Activated CD8-positive, alpha-beta T cell treated with anti-CD3 and anti-CD28 coated beads, Interleukin-2, amount 10 ng/mL, durations not matched to agents 7 days and 5 days (primary cell): ENCODE measurements at regions of chr6 and their contacts with region 1.

Region 1: DNA sequence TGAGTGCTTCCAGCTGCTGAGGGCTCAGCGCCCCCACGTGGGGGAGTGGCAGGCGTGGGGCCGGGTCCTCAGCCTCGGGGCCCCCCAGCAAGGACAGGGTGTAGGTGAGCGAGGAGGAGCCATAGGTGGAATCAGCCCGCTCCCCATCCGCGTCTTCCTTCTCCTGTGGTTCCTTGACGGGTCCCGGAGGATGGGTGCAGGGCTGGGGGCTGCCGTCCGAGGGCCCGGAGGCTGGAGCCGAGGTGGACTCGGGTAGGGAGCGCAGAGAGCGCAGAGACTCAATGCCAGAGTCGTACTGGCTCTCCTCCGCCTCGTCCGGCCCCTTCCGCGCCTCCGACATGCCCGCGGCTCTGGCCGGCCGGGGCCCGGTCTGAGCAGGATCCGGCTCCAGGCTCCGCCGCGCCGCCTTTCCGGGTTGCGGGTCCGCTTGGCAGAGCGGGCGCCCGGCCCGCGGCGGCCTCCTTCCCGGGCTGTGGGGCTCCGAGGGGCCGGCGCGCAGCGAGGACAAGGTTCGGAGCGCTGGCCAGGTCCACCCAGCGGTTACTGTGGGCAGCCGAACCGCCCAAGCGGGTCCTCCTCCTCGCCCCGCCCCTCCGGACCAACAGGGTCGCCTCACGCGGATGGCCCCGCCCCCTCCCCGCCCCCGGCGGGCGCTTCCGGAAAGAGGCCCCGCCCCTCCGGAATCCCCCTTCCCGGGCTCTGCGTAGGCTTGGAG is at the start of gene NFKBIE:
- DNase-seq: peak; percentile 91
- ATAC-seq: peak; percentile 73
- H3K4me3 Mint-ChIP-seq: peak within 1 kb of the TSS; percentile 98
- H3K27ac Mint-ChIP-seq: peak within 1 kb of the TSS; percentile 96
- H3K4me1 Mint-ChIP-seq: peaks cover 63% of the 10 kb centered on the region
- H3K27me3 Mint-ChIP-seq: peaks cover 15% of the 10 kb centered on the region
- total RNA-seq, gene NFKBIE: 14.1 to 16.9 TPM

Region 2: GRCh38 chr6:44138717-44139350 is 126.3 kb before region 1 on chr6:
- CTCF ChIA-PET with region 1: no interaction called
- POLR2A ChIA-PET with region 1: no interaction called
- DNase-seq: no peak
- ATAC-seq: no peak
- H3K4me3 Mint-ChIP-seq: no peak overlapping the region
- H3K27ac Mint-ChIP-seq: no peak overlapping the region
- H3K4me1 Mint-ChIP-seq: no peaks in the 10 kb centered on the region
- H3K27me3 Mint-ChIP-seq: no peaks in the 10 kb centered on the region

Region 3: DNA sequence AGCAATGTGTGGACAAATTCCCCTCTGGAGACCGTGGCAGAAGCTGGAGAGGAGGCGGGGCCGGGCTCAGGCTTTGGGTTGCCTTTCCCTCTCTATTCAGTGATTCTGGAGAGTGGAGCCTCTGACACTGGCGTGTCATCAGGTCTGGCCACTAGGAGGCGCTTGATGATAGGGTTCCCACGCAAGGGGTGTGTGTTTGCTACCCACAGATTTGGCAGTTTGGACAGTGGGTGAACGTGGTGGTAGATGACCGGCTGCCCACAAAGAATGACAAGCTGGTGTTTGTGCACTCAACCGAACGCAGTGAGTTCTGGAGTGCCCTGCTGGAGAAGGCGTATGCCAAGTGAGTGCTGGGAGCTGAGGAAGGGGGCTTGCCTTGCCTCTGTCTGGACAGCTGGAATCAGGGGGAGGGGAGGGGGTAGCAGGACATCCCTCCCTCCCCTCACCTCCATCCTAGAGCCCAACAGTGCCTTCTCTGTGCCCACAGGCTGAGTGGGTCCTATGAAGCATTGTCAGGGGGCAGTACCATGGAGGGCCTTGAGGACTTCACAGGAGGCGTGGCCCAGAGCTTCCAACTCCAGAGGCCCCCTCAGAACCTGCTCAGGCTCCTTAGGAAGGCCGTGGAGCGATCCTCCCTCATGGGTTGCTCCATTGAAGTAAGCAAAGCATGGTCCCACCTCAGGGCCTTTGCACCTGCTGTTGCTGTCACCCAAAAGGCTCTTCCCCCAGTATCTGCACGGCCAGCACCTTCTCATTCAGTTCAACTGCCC is 92.2 kb before region 1 on chr6:
- CTCF ChIA-PET with region 1: interaction called, 11 read pairs
- POLR2A ChIA-PET with region 1: no interaction called
- DNase-seq: peak; percentile 88
- ATAC-seq: peak; percentile 89
- H3K4me3 Mint-ChIP-seq: no peak overlapping the region
- H3K27ac Mint-ChIP-seq: peak overlapping the region; percentile 51
- H3K4me1 Mint-ChIP-seq: peaks cover 34% of the 10 kb centered on the region
- H3K27me3 Mint-ChIP-seq: peaks cover 14% of the 10 kb centered on the region

Region 4: DNA sequence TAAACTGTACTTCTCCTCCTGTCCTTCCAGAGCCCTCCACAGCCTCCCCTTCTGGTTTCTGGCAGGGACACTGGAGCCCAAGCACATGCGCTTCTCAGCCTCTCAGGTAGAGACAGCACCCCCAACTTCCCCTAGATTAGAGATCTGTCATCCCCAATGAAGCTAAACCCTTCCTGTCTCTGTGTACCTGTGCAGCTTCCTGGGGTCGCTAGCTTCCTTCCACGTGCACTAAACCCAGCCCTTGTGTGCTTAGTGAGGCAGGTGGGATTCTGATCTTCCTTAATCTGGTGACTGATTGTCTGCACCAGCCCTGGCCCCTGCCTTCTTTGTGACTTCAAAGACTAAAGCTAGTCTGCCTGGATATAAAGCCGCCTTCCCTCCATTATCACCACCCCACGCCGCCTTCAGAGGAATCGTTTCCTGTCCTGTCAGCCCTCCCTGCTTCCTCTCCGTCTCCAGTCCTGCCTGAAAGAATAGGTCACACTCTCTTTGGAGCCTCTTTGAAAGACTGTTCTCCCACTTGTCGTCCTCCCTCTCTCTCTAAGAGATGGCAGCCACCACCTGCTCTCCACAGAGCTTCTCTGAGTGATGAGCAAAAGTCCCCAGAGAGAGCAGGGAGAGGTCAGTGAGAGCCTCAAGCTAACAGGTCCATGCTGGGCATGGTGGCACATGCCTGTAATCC is 79.1 kb before region 1 on chr6:
- CTCF ChIA-PET with region 1: no interaction called
- POLR2A ChIA-PET with region 1: no interaction called
- DNase-seq: no peak
- ATAC-seq: peak; percentile 46
- H3K4me3 Mint-ChIP-seq: no peak overlapping the region
- H3K27ac Mint-ChIP-seq: peak overlapping the region; percentile 58
- H3K4me1 Mint-ChIP-seq: peaks cover 7% of the 10 kb centered on the region
- H3K27me3 Mint-ChIP-seq: peaks cover 5% of the 10 kb centered on the region

Region 5: DNA sequence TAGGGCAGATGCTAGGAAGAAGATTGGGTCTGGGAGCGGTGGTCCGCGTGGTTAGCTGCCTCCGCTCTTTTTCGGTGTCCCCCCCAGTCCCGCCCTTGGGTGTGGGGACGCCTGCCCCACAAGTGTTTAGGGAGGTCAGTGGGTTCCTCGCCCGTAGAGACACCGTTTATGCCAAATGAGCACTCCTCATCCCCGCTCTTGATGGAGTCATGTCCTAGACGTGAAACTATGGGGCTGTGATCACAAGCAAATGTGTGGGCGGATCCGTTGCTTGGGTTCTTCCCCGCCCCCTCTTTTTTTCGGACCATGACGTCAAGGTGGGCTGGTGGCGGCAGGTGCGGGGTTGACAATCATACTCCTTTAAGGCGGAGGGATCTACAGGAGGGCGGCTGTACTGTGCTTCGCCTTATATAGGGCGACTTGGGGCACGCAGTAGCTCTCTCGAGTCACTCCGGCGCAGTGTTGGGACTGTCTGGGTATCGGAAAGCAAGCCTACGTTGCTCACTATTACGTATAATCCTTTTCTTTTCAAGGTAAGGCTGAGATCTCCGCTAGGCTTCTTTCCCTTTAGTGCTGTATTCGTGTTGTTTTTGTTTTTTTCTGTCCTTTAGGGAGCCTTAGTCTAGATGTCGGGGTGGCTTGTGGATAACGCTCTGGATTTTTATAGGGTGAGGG is 18.4 kb before region 1 on chr6 and contains the start of gene HSP90AB1:
- CTCF ChIA-PET with region 1: interaction called, 9 read pairs
- POLR2A ChIA-PET with region 1: interaction called, 81 read pairs
- DNase-seq: peak; percentile 97
- ATAC-seq: peak; percentile 80
- H3K4me3 Mint-ChIP-seq: peak within 1 kb of the TSS; percentile 98
- H3K27ac Mint-ChIP-seq: peak within 1 kb of the TSS; percentile 99
- H3K4me1 Mint-ChIP-seq: peaks cover 44% of the 10 kb centered on the region
- H3K27me3 Mint-ChIP-seq: no peaks in the 10 kb centered on the region
- total RNA-seq, gene HSP90AB1: 741 to 755 TPM

Region 6: DNA sequence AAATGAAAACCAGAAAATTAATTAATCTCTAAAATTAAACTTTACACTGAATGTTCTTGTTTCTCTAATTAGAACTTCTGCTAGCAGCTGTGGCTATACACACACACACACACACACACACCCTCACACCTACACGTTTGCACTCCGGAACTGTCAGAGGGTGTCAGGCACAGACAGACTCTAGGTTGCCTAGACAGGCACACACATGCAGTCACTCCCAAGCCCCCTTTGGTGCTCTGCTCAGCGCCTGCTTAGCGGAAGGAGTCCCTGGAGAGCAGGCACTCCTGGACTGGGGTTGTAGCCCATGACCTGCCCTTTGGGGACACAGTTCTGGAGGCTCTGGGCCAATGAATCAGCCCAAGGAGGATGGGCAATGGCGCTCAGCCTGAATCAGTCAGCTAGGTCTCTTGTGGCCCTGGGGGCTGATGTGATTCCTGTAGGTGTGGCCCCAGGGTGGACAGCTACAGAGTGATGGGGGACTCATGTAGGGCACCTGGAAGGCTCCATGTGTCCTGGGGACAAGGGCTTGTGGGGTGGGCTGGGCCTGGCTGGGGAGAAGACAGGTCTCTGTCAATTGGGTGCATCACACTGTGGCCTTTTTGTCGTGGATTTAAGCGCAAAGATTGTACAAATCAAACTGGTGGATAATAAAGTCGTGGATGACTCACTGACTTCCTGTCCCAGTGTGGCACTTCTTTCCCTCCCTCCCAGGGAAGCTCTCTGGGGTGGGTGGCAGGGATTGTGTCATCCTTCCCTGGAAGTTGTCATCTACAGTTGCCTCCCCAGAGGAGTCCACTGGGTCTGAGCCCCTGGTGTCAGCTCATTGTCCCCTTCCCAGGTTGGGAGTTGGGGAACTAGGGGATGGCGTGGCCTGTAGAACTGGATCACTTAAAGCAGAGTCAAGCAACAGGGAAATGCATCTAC is 13.9 kb after region 1 on chr6:
- CTCF ChIA-PET with region 1: interaction called, 15 read pairs
- POLR2A ChIA-PET with region 1: no interaction called
- DNase-seq: no peak
- ATAC-seq: no peak
- H3K4me3 Mint-ChIP-seq: no peak overlapping the region
- H3K27ac Mint-ChIP-seq: no peak overlapping the region
- H3K4me1 Mint-ChIP-seq: no peaks in the 10 kb centered on the region
- H3K27me3 Mint-ChIP-seq: peaks cover 42% of the 10 kb centered on the region

Region 7: GRCh38 chr6:44304282-44305199 is 39.4 kb after region 1 on chr6:
- CTCF ChIA-PET with region 1: interaction called, 81 read pairs
- POLR2A ChIA-PET with region 1: interaction called, 4 read pairs
- DNase-seq: peak; percentile 48
- ATAC-seq: peak; percentile 55
- H3K4me3 Mint-ChIP-seq: no peak overlapping the region
- H3K27ac Mint-ChIP-seq: no peak overlapping the region
- H3K4me1 Mint-ChIP-seq: peaks cover 5% of the 10 kb centered on the region
- H3K27me3 Mint-ChIP-seq: no peaks in the 10 kb centered on the region

Region 8: DNA sequence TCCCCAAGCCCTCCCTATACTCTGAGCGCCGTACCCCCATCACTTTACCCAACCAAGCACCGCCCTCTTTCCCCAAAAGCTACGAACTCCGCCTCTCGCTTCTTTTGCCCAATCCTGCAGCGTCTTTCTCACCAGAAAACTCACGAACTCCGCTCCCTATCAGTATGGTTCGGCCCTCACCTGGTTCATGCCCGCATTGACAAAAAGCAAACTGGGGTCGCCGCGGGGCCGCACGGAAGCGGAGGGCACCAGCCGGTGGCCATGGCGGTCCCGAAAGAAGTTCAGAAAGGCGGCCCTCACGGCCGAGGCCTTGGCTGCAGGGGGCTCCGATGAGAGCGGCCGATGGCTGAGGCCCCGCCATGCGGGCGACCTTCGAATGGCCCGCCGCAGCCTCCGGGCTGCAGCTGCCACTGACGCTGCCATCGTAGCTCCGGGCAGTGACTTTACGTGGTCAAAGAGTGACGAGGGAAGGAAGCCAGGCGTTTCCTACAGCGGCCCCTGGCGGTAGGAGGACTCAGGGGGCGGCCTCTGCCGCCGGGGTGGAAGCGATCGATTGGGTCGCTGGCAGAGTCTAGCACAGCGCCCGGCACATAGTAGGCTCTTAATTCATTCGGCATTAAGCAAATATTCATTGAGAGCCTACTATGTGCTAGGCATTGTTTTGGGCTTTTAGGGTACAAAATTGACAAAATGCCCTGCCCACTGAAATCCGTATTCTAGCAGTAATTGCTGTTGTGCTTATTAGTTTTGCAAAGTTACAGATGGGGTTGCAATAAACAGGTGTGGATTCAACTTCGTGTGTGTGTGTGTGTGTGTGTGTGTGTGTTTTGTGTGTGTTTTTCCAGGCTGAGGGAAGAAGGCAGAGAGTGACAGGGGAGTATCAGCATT is 48.0 kb after region 1 on chr6 and contains the start of gene AARS2:
- CTCF ChIA-PET with region 1: interaction called, 81 read pairs
- POLR2A ChIA-PET with region 1: interaction called, 5 read pairs
- DNase-seq: peak; percentile 94
- ATAC-seq: peak; percentile 93
- H3K4me3 Mint-ChIP-seq: peak within 1 kb of the TSS; percentile 98
- H3K27ac Mint-ChIP-seq: peak within 1 kb of the TSS; percentile 96
- H3K4me1 Mint-ChIP-seq: peaks cover 17% of the 10 kb centered on the region
- H3K27me3 Mint-ChIP-seq: peaks cover 4% of the 10 kb centered on the region
- total RNA-seq, gene AARS2: 19.4 to 20.5 TPM

Region 9: GRCh38 chr6:44338228-44339122 is 73.3 kb after region 1 on chr6:
- CTCF ChIA-PET with region 1: interaction called, 137 read pairs
- POLR2A ChIA-PET with region 1: interaction called, 3 read pairs
- DNase-seq: peak; percentile 80
- ATAC-seq: peak; percentile 91
- H3K4me3 Mint-ChIP-seq: no peak overlapping the region
- H3K27ac Mint-ChIP-seq: no peak overlapping the region
- H3K4me1 Mint-ChIP-seq: peaks cover 2% of the 10 kb centered on the region
- H3K27me3 Mint-ChIP-seq: peaks cover 26% of the 10 kb centered on the region

Region 10: GRCh38 chr6:44352259-44352658 is 87.1 kb after region 1 on chr6:
- CTCF ChIA-PET with region 1: no interaction called
- POLR2A ChIA-PET with region 1: no interaction called
- DNase-seq: no peak
- ATAC-seq: no peak
- H3K4me3 Mint-ChIP-seq: no peak overlapping the region
- H3K27ac Mint-ChIP-seq: no peak overlapping the region
- H3K4me1 Mint-ChIP-seq: no peaks in the 10 kb centered on the region
- H3K27me3 Mint-ChIP-seq: peaks cover 14% of the 10 kb centered on the region

Region 11: DNA sequence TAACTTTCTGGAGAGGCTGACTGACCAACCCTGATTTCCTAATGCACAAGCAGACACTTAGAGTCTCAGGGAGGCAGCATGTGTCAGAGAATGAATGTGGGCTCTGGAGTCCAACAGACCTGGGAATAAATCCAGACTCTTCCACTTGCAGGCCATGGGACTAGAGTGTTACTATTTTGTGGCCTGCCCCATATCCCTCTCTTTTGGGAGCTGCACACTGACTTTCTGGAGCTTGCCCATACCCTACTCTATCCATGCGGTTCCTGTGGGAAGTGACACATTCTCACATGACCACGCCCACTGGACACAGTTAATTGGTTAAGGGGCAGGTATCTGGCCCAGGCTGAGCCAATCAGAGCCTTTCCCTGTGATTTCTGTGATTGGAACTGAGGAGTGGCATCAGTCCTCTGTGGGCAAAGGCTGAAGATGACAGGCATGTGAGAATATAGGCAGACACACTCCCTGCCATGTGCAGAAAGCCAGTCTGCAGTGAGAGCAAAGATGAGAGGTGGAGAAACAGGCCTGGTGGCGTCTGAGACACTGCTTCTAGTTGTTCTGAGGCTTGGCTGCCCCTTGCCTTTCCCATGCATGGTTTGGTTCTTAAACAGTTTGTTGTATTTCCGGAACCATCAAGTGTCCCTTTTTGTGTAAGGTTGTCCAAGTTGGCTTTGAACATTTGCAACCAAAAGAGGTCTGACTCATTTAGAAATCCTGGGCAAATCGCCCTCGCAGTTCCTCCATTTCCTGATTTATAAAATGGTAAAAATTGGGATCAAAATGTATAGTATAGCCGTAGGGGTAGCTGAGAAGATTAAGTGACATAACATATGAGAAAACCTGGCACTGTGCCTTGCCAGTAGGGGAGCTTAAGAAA is 247.9 kb after region 1 on chr6:
- CTCF ChIA-PET with region 1: no interaction called
- POLR2A ChIA-PET with region 1: no interaction called
- DNase-seq: no peak
- ATAC-seq: no peak
- H3K4me3 Mint-ChIP-seq: no peak overlapping the region
- H3K27ac Mint-ChIP-seq: no peak overlapping the region
- H3K4me1 Mint-ChIP-seq: no peaks in the 10 kb centered on the region
- H3K27me3 Mint-ChIP-seq: peaks cover 20% of the 10 kb centered on the region